ENCODE measurements at regions of chr10 and their contacts with region 1.

Region 1: DNA sequence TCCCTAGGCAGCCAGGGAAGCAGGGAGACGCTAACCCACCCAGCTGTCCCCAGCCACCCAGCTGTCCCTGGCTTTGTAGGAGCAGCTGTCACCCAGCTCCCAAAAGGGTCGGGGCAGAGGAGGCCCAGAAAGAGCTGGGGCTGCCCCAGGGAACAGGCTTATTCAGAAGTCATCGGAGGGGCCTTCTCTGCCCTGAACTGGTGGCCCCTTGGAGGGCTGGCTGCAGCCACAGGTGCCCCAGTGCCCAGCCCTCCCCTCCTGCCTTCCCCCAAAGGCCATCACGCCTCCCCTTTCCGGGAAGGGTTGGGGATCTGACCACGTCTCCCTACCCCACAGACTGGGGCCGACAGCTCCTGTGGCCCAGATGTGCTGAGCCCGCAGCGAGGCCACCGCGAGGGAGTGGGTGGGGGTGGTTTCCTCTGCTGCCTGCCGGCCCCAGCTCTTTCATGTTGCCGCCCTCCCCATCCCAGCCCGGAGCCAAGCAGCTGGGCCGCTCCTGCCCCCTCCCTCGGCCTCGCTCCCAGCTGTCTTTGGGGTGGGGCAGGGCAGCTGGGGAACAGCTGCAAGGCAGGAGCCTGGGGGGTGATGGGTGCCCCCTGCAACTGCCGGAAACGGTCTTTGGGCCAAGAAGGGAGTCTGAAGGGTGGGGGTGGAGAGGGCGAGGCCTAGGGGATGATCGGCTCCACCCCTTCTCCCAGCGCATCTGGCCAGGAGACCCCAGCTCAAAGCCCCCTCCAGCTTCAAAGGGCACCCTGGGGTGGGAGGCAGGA is 16.8 kb downstream of the TRIM8 start:
- DNase-seq: peak; percentile 77
- H3K4me3 Mint-ChIP-seq: peak overlapping the region; percentile 47
- H3K27ac Mint-ChIP-seq: peak overlapping the region; percentile 85
- H3K4me1 Mint-ChIP-seq: peaks cover 51% of the 10 kb centered on the region
- H3K27me3 Mint-ChIP-seq: no peaks in the 10 kb centered on the region

Region 2: GRCh38 chr10:102678842-102679289 is 17.8 kb after region 1 on chr10:
- CTCF ChIA-PET with region 1: interaction called, 9 read pairs
- POLR2A ChIA-PET with region 1: interaction called, 45 read pairs
- DNase-seq: no peak
- H3K4me3 Mint-ChIP-seq: no peak overlapping the region
- H3K27ac Mint-ChIP-seq: no peak overlapping the region
- H3K4me1 Mint-ChIP-seq: peaks cover 49% of the 10 kb centered on the region
- H3K27me3 Mint-ChIP-seq: no peaks in the 10 kb centered on the region